ENCODE measurements at regions of chr9 and their contacts with region 1.

Region 1: GRCh38 chr9:96317335-96317980 is 15.5 kb upstream of the HSD17B3 start:
- DNase-seq: peak; percentile 25
- ATAC-seq: no peak
- H3K4me3 Mint-ChIP-seq: no peak overlapping the region
- H3K27ac Mint-ChIP-seq: no peak overlapping the region
- H3K4me1 Mint-ChIP-seq: no peaks in the 10 kb centered on the region
- H3K27me3 Mint-ChIP-seq: peaks cover 4% of the 10 kb centered on the region
- CTCF ChIP-seq: peak; percentile 98

Region 2: DNA sequence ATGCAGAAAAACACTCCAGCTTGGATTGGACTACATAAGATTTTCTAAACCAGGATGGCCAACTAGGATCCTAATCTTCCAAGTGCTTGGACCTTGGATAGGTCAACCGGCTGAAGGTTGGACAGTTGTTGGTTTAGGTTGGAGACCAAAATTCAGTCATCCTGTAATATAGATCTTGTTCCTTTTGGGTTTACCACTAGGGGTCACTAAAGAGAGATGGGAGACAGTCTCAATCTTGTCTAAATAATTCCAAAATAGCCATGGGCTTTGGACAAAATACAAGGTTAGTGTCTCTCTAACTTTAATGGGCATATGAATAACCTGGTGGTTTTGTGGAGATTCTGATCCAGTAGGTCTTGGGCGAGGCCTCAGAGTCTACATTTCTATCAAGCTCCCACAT is 590.7 kb before region 1 on chr9:
- CTCF ChIA-PET with region 1: no interaction called
- POLR2A ChIA-PET with region 1: no interaction called
- intact Hi-C with region 1: loop called (anchors 2 kb)
- DNase-seq: no peak
- ATAC-seq: no peak
- H3K4me3 Mint-ChIP-seq: no peak overlapping the region
- H3K27ac Mint-ChIP-seq: no peak overlapping the region
- H3K4me1 Mint-ChIP-seq: peaks cover 13% of the 10 kb centered on the region
- H3K27me3 Mint-ChIP-seq: peaks cover 2% of the 10 kb centered on the region
- CTCF ChIP-seq: no peak

Region 3: GRCh38 chr9:96363175-96363967 is 45.9 kb after region 1 on chr9:
- CTCF ChIA-PET with region 1: no interaction called
- POLR2A ChIA-PET with region 1: no interaction called
- intact Hi-C with region 1: no loop called
- DNase-seq: no peak
- ATAC-seq: no peak
- H3K4me3 Mint-ChIP-seq: no peak overlapping the region
- H3K27ac Mint-ChIP-seq: no peak overlapping the region
- H3K4me1 Mint-ChIP-seq: no peaks in the 10 kb centered on the region
- H3K27me3 Mint-ChIP-seq: no peaks in the 10 kb centered on the region
- CTCF ChIP-seq: no peak